Activated CD8-positive, alpha-beta T cell treated with anti-CD3 and anti-CD28 coated beads for 36 hours (primary cell): ENCODE measurements at regions of chr17 and their contacts with region 1.

Region 1: DNA sequence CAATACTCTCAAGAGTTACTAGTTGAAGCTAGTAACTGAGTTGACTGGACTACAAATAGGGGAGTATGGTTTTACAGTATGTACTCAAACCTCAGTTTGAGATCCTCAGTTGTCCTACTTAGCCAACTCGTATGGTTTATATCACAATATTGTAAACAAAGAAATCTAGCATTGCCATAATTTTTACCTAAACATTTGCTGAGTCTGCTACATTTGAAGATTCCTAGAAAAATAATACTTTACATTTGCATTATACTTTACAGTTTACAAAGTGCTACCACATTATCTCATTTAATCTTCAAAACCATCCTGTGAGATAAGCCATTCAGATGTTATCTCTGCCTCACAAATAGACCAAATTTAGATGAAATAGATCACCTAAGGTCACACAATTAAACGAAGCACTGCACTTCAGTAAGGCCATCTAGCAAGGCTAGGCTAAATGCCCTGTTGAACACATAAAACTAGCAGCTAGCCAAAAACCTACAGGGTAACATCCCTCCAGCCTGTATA is 16.3 kb downstream of the CBX1 start:
- DNase-seq: no peak
- ATAC-seq: no peak
- H3K4me3 Mint-ChIP-seq: no peak overlapping the region
- H3K27ac Mint-ChIP-seq: no peak overlapping the region
- H3K4me1 Mint-ChIP-seq: peaks cover 10% of the 10 kb centered on the region
- H3K27me3 Mint-ChIP-seq: no peaks in the 10 kb centered on the region
- CTCF ChIP-seq: no peak

Region 2: GRCh38 chr17:48037036-48037837 is 47.8 kb before region 1 on chr17 and contains the start of gene COPZ2:
- CTCF ChIA-PET with region 1: interaction called, 22 read pairs
- POLR2A ChIA-PET with region 1: no interaction called
- intact Hi-C with region 1: no loop called
- DNase-seq: peak; percentile 74
- ATAC-seq: peak; percentile 92
- H3K4me3 Mint-ChIP-seq: peak within 1 kb of the TSS; percentile 72
- H3K27ac Mint-ChIP-seq: peak within 1 kb of the TSS; percentile 58
- H3K4me1 Mint-ChIP-seq: peaks cover 8% of the 10 kb centered on the region
- H3K27me3 Mint-ChIP-seq: peaks cover 29% of the 10 kb centered on the region
- CTCF ChIP-seq: peak; percentile 83
- total RNA-seq, gene COPZ2: 4.3 to 4.6 TPM

Region 3: DNA sequence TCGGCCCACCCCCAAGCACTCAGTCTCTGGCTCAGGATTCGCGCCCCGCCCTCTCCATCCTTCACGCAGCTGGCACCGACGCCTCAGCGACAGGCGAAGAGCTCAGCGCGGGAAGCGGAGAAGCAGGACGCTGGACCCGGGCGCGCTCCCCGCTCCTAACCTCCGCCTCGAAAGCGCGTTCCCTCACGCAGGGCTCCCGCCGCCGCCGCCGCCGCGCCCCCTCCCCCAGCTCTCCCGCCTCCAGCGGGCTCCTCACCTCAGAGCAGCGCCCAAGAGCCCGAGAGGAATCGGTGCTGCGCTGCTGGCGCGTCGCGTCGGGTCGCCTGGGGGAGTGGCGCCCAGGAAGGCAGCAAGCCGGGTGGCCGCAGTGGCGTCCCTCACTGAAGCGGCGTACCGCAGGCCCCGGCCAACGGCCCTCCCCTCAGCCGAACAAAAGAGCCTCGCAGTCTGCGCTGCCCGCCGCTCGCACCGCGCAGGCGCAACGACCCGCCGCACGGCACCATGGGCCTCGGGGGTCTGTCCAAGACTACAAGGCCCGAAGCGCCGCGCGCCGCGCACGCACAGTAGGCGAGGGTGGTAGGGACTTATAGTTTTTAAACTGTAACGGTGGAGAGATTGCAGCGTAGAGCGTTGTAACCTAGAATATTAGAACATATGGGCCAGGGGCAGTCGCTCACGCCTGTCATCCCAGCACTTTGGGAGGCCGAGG is 16.2 kb after region 1 on chr17 and contains the start of gene CBX1:
- CTCF ChIA-PET with region 1: interaction called, 44 read pairs
- POLR2A ChIA-PET with region 1: interaction called, 3 read pairs
- intact Hi-C with region 1: no loop called
- DNase-seq: peak; percentile 98
- ATAC-seq: peak; percentile 95
- H3K4me3 Mint-ChIP-seq: peak within 1 kb of the TSS; percentile 98
- H3K27ac Mint-ChIP-seq: peak within 1 kb of the TSS; percentile 91
- H3K4me1 Mint-ChIP-seq: peaks cover 40% of the 10 kb centered on the region
- H3K27me3 Mint-ChIP-seq: no peaks in the 10 kb centered on the region
- CTCF ChIP-seq: no peak
- total RNA-seq, gene CBX1: 52.3 to 53.0 TPM

Region 4: DNA sequence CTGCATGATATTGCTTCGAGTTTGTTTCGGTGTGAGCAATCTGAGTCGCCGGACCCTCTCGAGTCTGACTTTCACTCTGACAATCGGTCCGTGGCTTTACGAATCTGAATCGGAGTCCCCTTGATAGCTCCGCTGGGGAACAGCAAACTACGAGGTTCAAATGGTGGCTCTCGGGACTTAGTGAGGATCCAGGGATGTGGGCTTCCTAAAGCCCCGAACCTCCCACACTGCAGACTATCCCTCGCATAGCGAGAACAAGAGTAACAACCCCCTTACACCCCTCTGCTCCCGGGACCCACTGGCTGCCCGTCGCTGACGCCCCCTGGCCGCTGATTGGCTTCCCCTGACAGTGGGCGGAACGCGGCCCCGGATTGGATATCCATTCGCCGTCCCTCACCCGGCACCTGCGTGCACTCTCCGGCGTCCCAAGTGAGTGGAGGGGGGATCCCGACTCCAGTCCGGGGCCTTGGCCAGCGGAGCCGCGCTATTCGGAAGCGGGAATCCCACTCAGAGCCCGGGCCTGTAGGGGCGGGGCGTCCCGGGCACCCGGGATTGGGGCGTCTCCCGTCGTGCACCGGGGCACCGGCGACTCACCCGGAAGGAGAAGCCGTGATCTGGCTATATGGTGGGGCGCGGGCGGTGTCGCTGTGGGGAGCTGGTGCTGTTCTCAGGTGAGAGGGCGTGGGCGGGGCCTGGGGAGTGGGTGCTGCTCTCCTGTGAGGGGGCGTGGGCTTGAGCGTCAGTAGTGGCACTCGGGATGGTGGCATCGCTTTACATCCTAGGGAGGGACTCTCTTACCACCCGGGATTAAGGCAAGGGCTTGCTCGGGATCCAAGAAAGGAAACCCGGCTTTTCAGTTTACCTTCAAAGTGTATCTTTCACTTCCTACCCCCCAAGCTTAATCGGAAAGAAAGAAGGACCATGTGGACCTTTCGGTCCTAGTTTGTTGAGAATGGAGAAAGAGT is 22.5 kb after region 1 on chr17 and contains the start of gene SNX11:
- CTCF ChIA-PET with region 1: interaction called, 31 read pairs
- POLR2A ChIA-PET with region 1: interaction called, 3 read pairs
- intact Hi-C with region 1: no loop called
- DNase-seq: peak; percentile 95
- ATAC-seq: peak; percentile 88
- H3K4me3 Mint-ChIP-seq: peak within 1 kb of the TSS; percentile 98
- H3K27ac Mint-ChIP-seq: peak within 1 kb of the TSS; percentile 98
- H3K4me1 Mint-ChIP-seq: peaks cover 54% of the 10 kb centered on the region
- H3K27me3 Mint-ChIP-seq: no peaks in the 10 kb centered on the region
- CTCF ChIP-seq: no peak
- total RNA-seq, gene SNX11: 27.2 to 29.5 TPM

Region 5: GRCh38 chr17:48113201-48113676 is 28.3 kb after region 1 on chr17:
- CTCF ChIA-PET with region 1: interaction called, 31 read pairs
- POLR2A ChIA-PET with region 1: interaction called, 3 read pairs
- intact Hi-C with region 1: no loop called
- DNase-seq: peak; percentile 73
- ATAC-seq: peak; percentile 75
- H3K4me3 Mint-ChIP-seq: peak overlapping the region; percentile 54
- H3K27ac Mint-ChIP-seq: peak overlapping the region; percentile 90
- H3K4me1 Mint-ChIP-seq: peaks cover 44% of the 10 kb centered on the region
- H3K27me3 Mint-ChIP-seq: no peaks in the 10 kb centered on the region
- CTCF ChIP-seq: no peak

Region 6: GRCh38 chr17:48123111-48123510 is 38.1 kb after region 1 on chr17:
- CTCF ChIA-PET with region 1: interaction called, 135 read pairs
- POLR2A ChIA-PET with region 1: interaction called, 3 read pairs
- intact Hi-C with region 1: no loop called
- DNase-seq: no peak
- ATAC-seq: no peak
- H3K4me3 Mint-ChIP-seq: no peak overlapping the region
- H3K27ac Mint-ChIP-seq: no peak overlapping the region
- H3K4me1 Mint-ChIP-seq: no peaks in the 10 kb centered on the region
- H3K27me3 Mint-ChIP-seq: no peaks in the 10 kb centered on the region
- CTCF ChIP-seq: no peak

Region 7: GRCh38 chr17:48131216-48131824 is 46.3 kb after region 1 on chr17:
- CTCF ChIA-PET with region 1: interaction called, 135 read pairs
- POLR2A ChIA-PET with region 1: no interaction called
- intact Hi-C with region 1: loop called (anchors 2 kb)
- DNase-seq: peak; percentile 66
- ATAC-seq: peak; percentile 78
- H3K4me3 Mint-ChIP-seq: no peak overlapping the region
- H3K27ac Mint-ChIP-seq: no peak overlapping the region
- H3K4me1 Mint-ChIP-seq: no peaks in the 10 kb centered on the region
- H3K27me3 Mint-ChIP-seq: no peaks in the 10 kb centered on the region
- CTCF ChIP-seq: peak; percentile 89

Region 8: DNA sequence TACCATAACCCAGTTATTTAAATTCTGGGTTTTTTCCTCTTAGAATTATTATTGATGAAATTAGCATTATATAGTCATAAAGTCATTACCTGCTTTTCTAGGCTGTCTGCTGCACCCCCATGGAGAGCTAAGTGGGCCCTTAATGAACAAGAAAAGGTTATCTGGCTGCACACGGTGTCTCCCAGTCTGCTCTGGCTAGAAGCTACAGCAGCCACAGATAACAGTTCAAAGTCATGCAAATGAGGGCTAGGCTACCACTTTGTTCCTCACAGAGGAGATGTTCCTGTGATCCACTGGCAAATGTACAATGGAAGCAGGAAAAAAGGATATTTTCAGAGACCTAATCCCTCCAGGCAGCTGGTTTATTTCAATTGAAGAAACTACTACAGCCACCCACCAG is 134.6 kb after region 1 on chr17:
- CTCF ChIA-PET with region 1: no interaction called
- POLR2A ChIA-PET with region 1: no interaction called
- intact Hi-C with region 1: no loop called
- DNase-seq: no peak
- ATAC-seq: no peak
- H3K4me3 Mint-ChIP-seq: no peak overlapping the region
- H3K27ac Mint-ChIP-seq: no peak overlapping the region
- H3K4me1 Mint-ChIP-seq: peaks cover 22% of the 10 kb centered on the region
- H3K27me3 Mint-ChIP-seq: no peaks in the 10 kb centered on the region
- CTCF ChIP-seq: no peak